Psoas muscle (tissue), 8 donors: ENCODE measurements at regions of chr1 and their contacts with region 1.

Region 1: GRCh38 chr1:27915082-27915598 is 19.7 kb upstream of the SMPDL3B start:
- DNase-seq: no peak
- ATAC-seq: no peak
- H3K4me3 ChIP-seq: peak overlapping the region; percentile 79
- H3K27ac ChIP-seq: peak overlapping the region; percentile 87
- H3K4me1 ChIP-seq: peaks cover 6% of the 10 kb centered on the region
- H3K27me3 ChIP-seq: no peaks in the 10 kb centered on the region
- CTCF ChIP-seq: no peak

Region 2: GRCh38 chr1:27970401-27970800 is 55.3 kb after region 1 on chr1:
- intact Hi-C with region 1: loop called in 1 of 2 experiments (anchors 5 kb)
- DNase-seq: peak; percentile 59 to 74
- ATAC-seq: peak; percentile 61 to 75 (median 67)
- H3K4me3 ChIP-seq: no peak overlapping the region
- H3K27ac ChIP-seq: peak overlapping the region; percentile 54
- H3K4me1 ChIP-seq: peaks cover 9% of the 10 kb centered on the region
- H3K27me3 ChIP-seq: no peaks in the 10 kb centered on the region
- CTCF ChIP-seq: no peak